ENCODE measurements at regions of chr18 and their contacts with region 1.

Region 1: GRCh38 chr18:12883684-12884405 is at the start of gene PTPN2:
- DNase-seq: peak; percentile 95
- ATAC-seq: peak; percentile 92
- H3K4me3 ChIP-seq: peak within 1 kb of the TSS; percentile 71
- H3K27ac ChIP-seq: peak within 1 kb of the TSS; percentile 99
- H3K4me1 ChIP-seq: peaks cover 9% of the 10 kb centered on the region
- H3K27me3 ChIP-seq: no peaks in the 10 kb centered on the region
- CTCF ChIP-seq: no peak
- POLR2A ChIP-seq: peak; percentile 98
- RAD21 ChIP-seq: no peak
- total RNA-seq, gene PTPN2: 30.6 and 36.9 TPM in 2 replicates

Region 2: GRCh38 chr18:12556946-12557806 is 326.7 kb before region 1 on chr18:
- CTCF ChIA-PET with region 1: no interaction called
- POLR2A ChIA-PET with region 1: interaction called, 17 read pairs
- dilution Hi-C with region 1: no loop called
- in situ Hi-C with region 1: no loop called
- intact Hi-C with region 1: no loop called
- DNase-seq: no peak
- ATAC-seq: no peak
- H3K4me3 ChIP-seq: no peak overlapping the region
- H3K27ac ChIP-seq: no peak overlapping the region
- H3K4me1 ChIP-seq: no peaks in the 10 kb centered on the region
- H3K27me3 ChIP-seq: no peaks in the 10 kb centered on the region
- CTCF ChIP-seq: no peak
- POLR2A ChIP-seq: no peak
- RAD21 ChIP-seq: no peak

Region 3: GRCh38 chr18:12838178-12838634 is 45.6 kb before region 1 on chr18:
- CTCF ChIA-PET with region 1: no interaction called
- POLR2A ChIA-PET with region 1: no interaction called
- dilution Hi-C with region 1: no loop called
- in situ Hi-C with region 1: loop called (anchors 5 kb)
- intact Hi-C with region 1: loop called (anchors 2 kb)
- DNase-seq: peak; percentile 90
- ATAC-seq: peak; percentile 88
- H3K4me3 ChIP-seq: no peak overlapping the region; the same call in 1 of the 2 replicates
- H3K27ac ChIP-seq: peak overlapping the region; percentile 93
- H3K4me1 ChIP-seq: peaks cover 15% of the 10 kb centered on the region
- H3K27me3 ChIP-seq: no peaks in the 10 kb centered on the region
- CTCF ChIP-seq: 0 out of 2 replicates have a peak, but pooled peaks have one; percentile 8
- POLR2A ChIP-seq: no peak
- RAD21 ChIP-seq: no peak

Region 4: GRCh38 chr18:12851716-12852115 is 32.1 kb before region 1 on chr18:
- CTCF ChIA-PET with region 1: interaction called, 3 read pairs
- POLR2A ChIA-PET with region 1: interaction called, 3 read pairs
- dilution Hi-C with region 1: no loop called
- in situ Hi-C with region 1: no loop called
- intact Hi-C with region 1: loop called (anchors 1 kb)
- DNase-seq: peak; percentile 57
- ATAC-seq: peak; percentile 85
- H3K4me3 ChIP-seq: no peak overlapping the region
- H3K27ac ChIP-seq: peak overlapping the region; percentile 14; the same call in 1 of the 2 replicates
- H3K4me1 ChIP-seq: peaks cover 3% of the 10 kb centered on the region; the same call in 1 of the 2 replicates
- H3K27me3 ChIP-seq: no peaks in the 10 kb centered on the region
- CTCF ChIP-seq: no peak
- POLR2A ChIP-seq: no peak
- RAD21 ChIP-seq: no peak

Region 5: GRCh38 chr18:12904012-12904516 is 20.2 kb after region 1 on chr18:
- CTCF ChIA-PET with region 1: interaction called, 5 read pairs
- POLR2A ChIA-PET with region 1: interaction called, 18 read pairs
- dilution Hi-C with region 1: no loop called
- in situ Hi-C with region 1: no loop called
- intact Hi-C with region 1: no loop called
- DNase-seq: no peak
- ATAC-seq: no peak; the same call in 1 of the 2 replicates
- H3K4me3 ChIP-seq: no peak overlapping the region
- H3K27ac ChIP-seq: no peak overlapping the region
- H3K4me1 ChIP-seq: peaks cover 11% of the 10 kb centered on the region
- H3K27me3 ChIP-seq: peaks cover 4% of the 10 kb centered on the region; the same call in 1 of the 2 replicates
- CTCF ChIP-seq: no peak
- POLR2A ChIP-seq: no peak
- RAD21 ChIP-seq: no peak

Measured in IMR-90 (cell line).